ENCODE measurements at regions of chr6 and their contacts with region 1.

Region 1: GRCh38 chr6:31267651-31268368 is 4.1 kb downstream of the HLA-C start:
- DNase-seq: no peak
- CTCF ChIP-seq: no peak

Region 2: GRCh38 chr6:31351401-31352309 is 83.8 kb after region 1 on chr6:
- in situ Hi-C with region 1: loop called (anchors 5 kb)
- DNase-seq: no peak
- CTCF ChIP-seq: no peak